ENCODE measurements at regions of chr17 and their contacts with region 1.

Region 1: DNA sequence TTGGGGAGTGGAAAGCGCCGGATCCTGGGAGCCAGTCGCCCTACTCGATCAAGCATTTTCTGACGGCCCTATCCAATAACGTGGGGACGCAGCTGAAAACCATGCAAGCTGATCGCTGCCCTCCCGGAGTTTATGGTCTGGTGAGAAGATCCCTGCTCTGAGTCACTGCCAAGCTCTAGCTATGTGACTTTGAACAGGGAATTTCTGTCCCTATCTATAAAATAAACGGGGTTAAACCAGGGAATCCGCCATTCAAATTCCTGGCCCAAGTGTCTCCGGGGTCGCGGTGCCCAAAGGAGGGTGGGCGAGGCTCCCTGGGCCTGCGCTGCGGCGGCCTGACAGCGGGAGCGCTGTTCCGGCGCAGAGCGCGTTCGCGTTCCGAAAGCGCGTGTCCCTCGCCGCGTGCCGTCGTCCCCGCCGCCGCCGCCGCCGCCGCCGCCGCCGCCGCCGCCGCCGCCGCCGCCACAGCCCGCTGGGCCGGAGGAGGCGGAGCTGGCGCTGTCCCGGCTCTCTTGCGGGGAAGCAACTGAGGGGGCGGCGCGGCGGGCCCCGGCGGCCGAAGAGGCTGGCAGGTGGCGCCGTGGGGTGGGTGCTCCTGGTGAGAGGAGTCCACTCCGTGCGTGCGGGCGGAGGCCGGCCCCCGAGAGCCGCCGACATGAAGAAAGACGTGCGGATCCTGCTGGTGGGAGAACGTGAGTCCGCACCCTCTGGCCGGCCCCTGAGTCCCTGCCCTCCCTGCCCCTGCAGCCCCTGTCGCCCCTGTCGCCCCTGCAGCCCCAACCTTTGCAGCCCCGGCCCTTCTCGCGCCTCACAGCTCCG is at the start of gene RHOT1:
- DNase-seq: peak; percentile 58
- H3K4me3 ChIP-seq: peak within 1 kb of the TSS; percentile 92
- H3K27ac ChIP-seq: peak within 1 kb of the TSS; percentile 91
- H3K27me3 ChIP-seq: no peaks in the 10 kb centered on the region
- CTCF ChIP-seq: peak; percentile 63
- polyA plus RNA-seq, gene RHOT1: 44.4 and 59.0 TPM in 2 replicates

Region 2: DNA sequence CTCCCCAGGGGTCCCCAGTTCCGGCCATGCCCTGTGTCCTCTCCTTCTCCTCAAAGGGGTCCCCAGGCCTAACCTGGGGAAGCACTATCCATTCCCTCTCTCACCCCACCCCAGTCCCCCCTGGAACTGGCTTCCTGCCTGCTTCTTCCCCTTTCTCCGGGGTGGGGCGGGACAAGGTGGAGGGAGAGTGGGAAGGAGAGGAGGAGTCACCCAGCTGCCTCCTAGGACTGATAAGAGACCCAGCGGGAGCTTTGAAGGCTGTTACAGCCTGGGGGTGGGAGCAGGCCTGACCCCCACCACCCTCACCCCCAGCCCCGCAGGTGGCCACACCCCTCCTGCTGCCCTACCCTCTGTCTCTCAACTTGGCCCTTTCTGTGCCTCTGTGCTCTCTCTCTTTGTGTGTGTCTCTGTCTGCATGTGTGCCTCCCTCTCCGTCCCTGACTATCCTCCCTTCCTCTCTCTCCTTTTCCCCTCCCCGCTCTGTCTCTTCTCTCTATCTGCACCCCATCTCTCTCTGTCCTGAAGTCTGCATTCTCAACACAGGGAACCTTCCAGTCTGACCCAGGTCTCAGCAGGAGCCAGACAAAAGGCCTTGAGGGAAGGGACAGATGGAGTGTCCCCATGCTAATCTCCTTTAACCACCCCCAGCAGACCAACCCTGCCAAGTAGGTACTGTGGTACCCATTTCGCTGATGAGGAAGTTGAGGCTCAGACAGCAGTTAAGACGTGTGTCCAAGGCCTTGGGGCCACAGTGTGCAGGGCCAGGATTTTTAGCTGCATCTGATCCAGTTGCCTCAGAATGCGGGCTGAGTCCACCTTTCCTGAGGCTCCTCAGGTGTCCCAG is 684.6 kb before region 1 on chr17:
- CTCF ChIA-PET with region 1: no interaction called
- POLR2A ChIA-PET with region 1: no interaction called
- DNase-seq: no peak
- H3K4me3 ChIP-seq: no peak overlapping the region
- H3K27ac ChIP-seq: no peak overlapping the region
- H3K27me3 ChIP-seq: peaks cover 46% of the 10 kb centered on the region
- CTCF ChIP-seq: no peak

Region 3: DNA sequence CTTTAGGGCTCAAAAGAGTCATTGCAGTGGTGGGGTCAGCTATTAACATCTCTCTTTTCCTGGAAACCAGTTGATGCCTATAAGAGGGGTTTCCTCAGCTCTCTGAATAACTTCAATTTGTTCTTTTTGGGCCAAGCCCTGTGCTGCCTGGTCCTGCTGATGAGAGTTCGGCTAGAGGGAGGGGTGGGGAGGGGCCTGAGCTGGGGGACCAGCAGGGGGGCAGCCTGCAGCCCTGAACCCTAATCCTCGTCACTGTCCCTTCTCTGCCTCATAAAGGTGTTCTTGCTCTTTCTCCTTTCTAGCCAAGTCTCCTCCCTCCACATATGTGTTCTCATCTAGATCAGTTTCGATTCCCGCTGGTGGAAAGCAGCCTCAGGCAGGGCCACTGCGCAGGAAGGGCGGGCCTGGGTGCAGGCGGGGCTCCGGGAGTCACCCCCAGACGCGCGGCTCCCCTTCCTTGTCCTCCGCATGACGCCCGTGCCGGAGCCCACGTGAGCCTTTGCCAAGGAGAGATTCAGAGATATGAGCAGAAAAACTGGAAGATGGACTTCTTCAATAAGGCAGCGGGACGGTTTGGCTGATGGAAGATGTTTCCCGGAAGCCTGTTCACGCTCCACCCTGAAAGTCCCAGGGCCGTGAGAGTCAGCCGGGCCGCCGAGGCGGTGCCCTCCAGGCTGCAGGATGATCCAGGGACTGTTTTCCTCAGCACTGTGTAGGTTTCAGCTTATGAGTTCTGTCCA is 14.9 kb before region 1 on chr17:
- CTCF ChIA-PET with region 1: interaction called, 17 read pairs
- POLR2A ChIA-PET with region 1: interaction called, 3 read pairs
- DNase-seq: peak; percentile 15
- H3K4me3 ChIP-seq: peak overlapping the region; percentile 62
- H3K27ac ChIP-seq: peak overlapping the region; percentile 33
- H3K27me3 ChIP-seq: no peaks in the 10 kb centered on the region
- CTCF ChIP-seq: no peak

Region 4: DNA sequence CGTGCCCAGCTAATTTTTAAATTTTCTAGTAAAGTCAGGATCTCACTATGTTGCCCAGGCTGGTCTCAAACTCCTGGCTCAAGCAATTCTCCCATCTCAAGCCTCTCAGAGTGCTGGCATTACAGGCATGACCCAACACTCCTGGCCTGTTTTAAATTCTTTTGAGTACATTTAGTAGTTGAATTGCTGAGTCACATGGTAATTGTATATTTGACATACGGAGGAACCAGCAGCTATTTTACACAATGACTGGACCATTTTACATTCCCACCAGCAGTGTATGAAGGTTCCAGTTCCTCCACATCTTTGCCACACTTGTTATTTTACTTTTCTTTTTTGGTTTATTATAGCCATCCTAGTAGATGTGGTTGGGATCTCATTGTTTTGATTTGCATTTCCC is 43.6 kb after region 1 on chr17:
- CTCF ChIA-PET with region 1: interaction called, 15 read pairs
- POLR2A ChIA-PET with region 1: no interaction called
- DNase-seq: no peak
- H3K4me3 ChIP-seq: no peak overlapping the region
- H3K27ac ChIP-seq: no peak overlapping the region
- H3K27me3 ChIP-seq: no peaks in the 10 kb centered on the region
- CTCF ChIP-seq: no peak